ENCODE measurements at regions of chr14 and their contacts with region 1.

Region 1: DNA sequence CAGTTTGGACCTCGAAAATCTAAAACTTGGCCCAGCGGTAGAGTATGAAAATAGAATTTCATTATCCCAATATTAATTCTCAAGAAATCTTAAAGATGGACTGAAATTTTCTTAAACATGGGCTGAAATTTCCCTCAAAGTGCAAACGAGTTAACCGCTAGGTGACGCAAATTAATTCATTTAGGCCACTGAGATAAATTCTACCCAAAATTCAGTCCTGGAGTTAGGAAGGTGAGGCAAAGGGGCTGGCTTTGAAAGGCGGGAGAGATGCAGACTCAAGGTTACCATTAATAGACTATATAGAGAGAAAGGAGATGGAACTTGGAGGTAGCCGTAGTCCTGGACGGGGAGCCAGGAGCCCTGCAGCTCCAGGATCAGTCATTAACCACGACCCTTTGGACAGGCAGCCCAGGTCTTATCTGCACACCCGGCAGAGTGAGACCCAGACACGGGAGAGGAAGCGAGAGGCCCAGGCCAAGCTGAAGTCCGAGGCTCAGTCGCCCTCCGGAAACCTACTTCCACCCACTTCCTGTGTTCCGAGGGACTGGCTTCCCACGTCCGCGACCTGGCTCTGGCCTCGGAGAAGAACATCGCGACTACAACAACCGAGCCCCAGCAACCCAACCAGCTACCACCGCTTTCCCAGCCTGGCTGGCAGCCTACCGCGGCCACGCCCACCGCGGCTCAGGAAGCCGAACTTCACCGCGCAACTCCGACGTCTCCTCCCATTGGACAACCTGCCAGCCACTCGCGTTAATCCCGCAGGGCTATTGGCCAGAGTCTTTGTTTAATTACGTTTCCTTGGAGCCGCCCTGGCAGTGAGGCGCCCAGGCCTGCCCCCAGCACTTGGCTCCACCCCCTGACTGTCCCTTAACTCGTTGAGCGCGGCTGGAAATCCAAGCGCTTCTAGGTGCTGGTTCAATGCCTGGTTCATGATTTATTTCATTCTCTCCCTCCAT is at the start of gene EFCAB11:
- DNase-seq: peak; percentile 97
- H3K4me3 Mint-ChIP-seq: peak within 1 kb of the TSS; percentile 94
- H3K27ac Mint-ChIP-seq: peak within 1 kb of the TSS; percentile 89
- H3K4me1 Mint-ChIP-seq: peaks cover 37% of the 10 kb centered on the region
- H3K27me3 Mint-ChIP-seq: no peaks in the 10 kb centered on the region
- total RNA-seq, gene EFCAB11: 7.0 to 9.5 TPM

Region 2: GRCh38 chr14:88005978-88006851 is 1948.1 kb before region 1 on chr14:
- CTCF ChIA-PET with region 1: no interaction called
- intact Hi-C with region 1: loop called (anchors 2 kb)
- DNase-seq: peak; percentile 85
- H3K4me3 Mint-ChIP-seq: peak overlapping the region; percentile 88
- H3K27ac Mint-ChIP-seq: peak overlapping the region; percentile 95
- H3K4me1 Mint-ChIP-seq: peaks cover 63% of the 10 kb centered on the region
- H3K27me3 Mint-ChIP-seq: no peaks in the 10 kb centered on the region

Region 3: DNA sequence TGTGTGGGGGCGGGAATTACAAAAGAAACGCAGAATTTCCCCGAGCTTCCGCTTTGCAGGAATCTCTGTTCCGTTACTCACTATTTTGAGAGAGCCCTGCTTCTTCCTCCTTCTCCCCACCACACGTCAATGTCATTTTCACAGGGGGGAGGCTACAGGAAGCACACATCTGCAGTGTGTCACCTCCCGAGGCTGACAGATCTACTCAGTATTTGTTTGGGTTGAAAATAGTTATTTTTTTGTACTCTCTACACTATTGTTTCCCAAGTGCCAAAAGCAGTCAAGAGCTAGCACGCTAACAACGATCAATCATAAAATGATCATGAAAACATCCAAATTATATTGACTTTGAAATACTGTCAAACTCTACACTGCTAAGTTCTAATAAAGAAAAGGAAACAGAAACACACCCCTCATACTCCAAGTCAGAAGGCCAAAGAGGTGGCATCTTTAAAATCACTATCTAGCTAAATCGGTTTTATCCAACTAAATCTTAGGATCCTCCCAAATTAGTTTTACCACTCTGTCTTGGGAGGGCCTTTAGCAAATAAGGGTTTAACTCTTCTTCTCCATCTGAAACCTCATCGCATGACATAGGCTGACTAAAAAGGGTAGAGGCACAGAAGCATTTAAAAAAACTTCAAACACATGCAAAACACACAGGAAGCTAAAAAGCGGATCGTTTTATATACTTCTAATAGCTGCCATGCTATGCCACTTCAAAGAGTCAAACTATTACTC is 589.1 kb before region 1 on chr14:
- CTCF ChIA-PET with region 1: no interaction called
- intact Hi-C with region 1: loop called (anchors 1 kb)
- DNase-seq: peak; percentile 80
- H3K4me3 Mint-ChIP-seq: peak overlapping the region; percentile 73
- H3K27ac Mint-ChIP-seq: peak overlapping the region; percentile 97
- H3K4me1 Mint-ChIP-seq: peaks cover 66% of the 10 kb centered on the region
- H3K27me3 Mint-ChIP-seq: no peaks in the 10 kb centered on the region

Region 4: DNA sequence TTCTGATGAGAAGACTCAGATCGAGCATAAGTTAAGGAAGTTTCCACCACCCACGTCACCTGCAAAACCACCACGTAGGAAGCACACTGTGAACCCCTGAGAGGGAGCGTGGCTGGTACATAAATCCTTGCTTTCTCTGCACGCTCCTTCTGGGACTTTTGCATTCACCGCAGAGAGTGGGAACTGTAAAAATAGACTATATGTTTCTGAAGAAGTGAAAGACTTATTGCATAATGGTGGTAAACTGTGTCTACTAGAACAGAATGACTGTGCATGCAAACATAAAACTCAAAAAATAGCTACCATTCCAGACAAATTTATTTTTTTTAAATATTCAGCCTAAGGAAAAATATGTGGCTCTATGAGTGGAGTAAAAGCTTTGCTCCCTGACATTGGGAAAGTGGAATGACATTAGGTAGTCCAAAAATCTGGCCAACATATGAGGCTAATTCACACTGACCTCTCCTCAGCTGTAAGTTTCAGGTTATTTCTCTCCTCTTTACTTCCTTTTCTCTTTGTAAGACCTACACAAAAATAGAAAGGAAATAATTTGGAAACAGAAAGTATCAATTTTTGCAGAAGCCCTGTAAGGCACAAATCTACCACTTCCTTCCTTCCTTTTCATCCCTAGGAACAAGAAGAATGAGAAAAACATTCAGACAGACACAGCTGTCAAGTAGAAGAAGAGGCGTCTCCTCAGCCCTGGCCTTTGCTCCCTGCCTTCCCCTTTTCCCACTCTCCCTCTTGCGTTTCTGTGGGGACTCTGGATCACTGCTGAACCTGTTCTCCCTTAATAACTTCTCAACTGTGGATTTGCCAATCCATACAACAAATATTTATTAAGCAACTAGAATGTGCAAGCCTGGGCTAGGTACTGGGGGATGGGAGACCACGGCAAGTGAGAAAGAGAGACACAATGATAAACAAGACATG is 273.0 kb before region 1 on chr14:
- CTCF ChIA-PET with region 1: no interaction called
- intact Hi-C with region 1: loop called (anchors 2 kb)
- DNase-seq: peak; percentile 80
- H3K4me3 Mint-ChIP-seq: peak overlapping the region; percentile 44
- H3K27ac Mint-ChIP-seq: peak overlapping the region; percentile 81
- H3K4me1 Mint-ChIP-seq: peaks cover 38% of the 10 kb centered on the region
- H3K27me3 Mint-ChIP-seq: no peaks in the 10 kb centered on the region

Region 5: GRCh38 chr14:89805501-89805900 is 148.8 kb before region 1 on chr14:
- CTCF ChIA-PET with region 1: no interaction called
- intact Hi-C with region 1: no loop called
- DNase-seq: no peak
- H3K4me3 Mint-ChIP-seq: no peak overlapping the region
- H3K27ac Mint-ChIP-seq: no peak overlapping the region
- H3K4me1 Mint-ChIP-seq: no peaks in the 10 kb centered on the region
- H3K27me3 Mint-ChIP-seq: no peaks in the 10 kb centered on the region

Region 6: GRCh38 chr14:90060312-90060964 is 106.1 kb after region 1 on chr14:
- CTCF ChIA-PET with region 1: no interaction called
- intact Hi-C with region 1: loop called (anchors 1 kb)
- DNase-seq: peak; percentile 49
- H3K4me3 Mint-ChIP-seq: peak overlapping the region; percentile 72
- H3K27ac Mint-ChIP-seq: no peak overlapping the region
- H3K4me1 Mint-ChIP-seq: peaks cover 14% of the 10 kb centered on the region
- H3K27me3 Mint-ChIP-seq: peaks cover 54% of the 10 kb centered on the region

Region 7: GRCh38 chr14:90399541-90400444 is 445.4 kb after region 1 on chr14:
- CTCF ChIA-PET with region 1: no interaction called
- intact Hi-C with region 1: loop called (anchors 1 kb)
- DNase-seq: peak; percentile 93
- H3K4me3 Mint-ChIP-seq: peak overlapping the region; percentile 96
- H3K27ac Mint-ChIP-seq: peak overlapping the region; percentile 97
- H3K4me1 Mint-ChIP-seq: peaks cover 52% of the 10 kb centered on the region
- H3K27me3 Mint-ChIP-seq: no peaks in the 10 kb centered on the region

Region 8: DNA sequence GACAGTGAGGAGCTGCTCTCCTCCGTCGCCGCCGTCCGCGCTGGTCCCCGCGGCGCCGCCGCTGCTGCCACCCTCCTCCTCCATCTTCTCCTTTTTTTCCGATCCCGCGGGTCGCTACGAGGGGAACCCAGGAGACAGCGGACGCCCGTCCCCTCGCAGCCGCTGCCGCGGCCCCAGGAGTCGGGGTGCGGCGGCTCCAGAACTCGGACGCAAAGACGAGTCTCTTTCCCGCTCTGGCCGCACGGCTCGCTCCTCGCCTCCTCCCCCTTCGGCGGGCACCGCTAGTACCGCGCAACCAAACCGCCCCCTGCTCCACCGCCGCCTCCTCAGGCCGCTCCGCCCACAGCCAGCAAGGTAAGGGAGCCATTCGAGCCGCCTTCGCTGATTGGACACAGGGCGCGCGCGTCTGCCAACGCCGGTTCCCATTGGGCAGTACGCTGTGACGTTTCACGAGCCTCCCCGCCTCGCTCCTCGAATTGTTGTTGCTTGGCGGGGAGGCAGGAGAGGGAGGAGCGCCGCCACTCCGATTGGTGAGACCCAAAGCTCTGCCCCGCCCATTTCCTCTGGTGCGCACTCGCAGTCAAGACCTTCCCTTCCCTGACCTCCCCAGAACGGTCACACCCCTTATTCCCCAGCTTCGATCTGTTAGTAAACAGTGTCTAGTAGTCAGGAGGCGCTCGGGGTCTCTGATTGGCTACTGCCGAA is 1106.2 kb after region 1 on chr14 and contains the start of gene RPS6KA5:
- CTCF ChIA-PET with region 1: no interaction called
- intact Hi-C with region 1: loop called (anchors 10 kb)
- DNase-seq: peak; percentile 100
- H3K4me3 Mint-ChIP-seq: peak within 1 kb of the TSS; percentile 82
- H3K27ac Mint-ChIP-seq: peak within 1 kb of the TSS; percentile 26
- H3K4me1 Mint-ChIP-seq: peaks cover 44% of the 10 kb centered on the region
- H3K27me3 Mint-ChIP-seq: no peaks in the 10 kb centered on the region
- total RNA-seq, gene RPS6KA5: 10.0 to 12.0 TPM

Measured in activated naive CD4-positive, alpha-beta T cell treated with anti-CD3 and anti-CD28 coated beads for 36 hours (primary cell).